Activated naive CD4-positive, alpha-beta T cell treated with anti-CD3 and anti-CD28 coated beads for 36 hours (primary cell): ENCODE measurements at regions of chr17 and their contacts with region 1.

Region 1: GRCh38 chr17:75289115-75289831 is at the start of gene SLC25A19:
- DNase-seq: peak; percentile 99
- H3K4me3 Mint-ChIP-seq: peak within 1 kb of the TSS; percentile 99
- H3K27ac Mint-ChIP-seq: peak within 1 kb of the TSS; percentile 100
- H3K4me1 Mint-ChIP-seq: peaks cover 26% of the 10 kb centered on the region
- H3K27me3 Mint-ChIP-seq: no peaks in the 10 kb centered on the region
- total RNA-seq, gene SLC25A19: 47.5 to 48.4 TPM

Region 2: GRCh38 chr17:74394977-74395376 is 894.3 kb before region 1 on chr17:
- CTCF ChIA-PET with region 1: no interaction called
- intact Hi-C with region 1: no loop called
- DNase-seq: no peak
- H3K4me3 Mint-ChIP-seq: no peak overlapping the region
- H3K27ac Mint-ChIP-seq: no peak overlapping the region
- H3K4me1 Mint-ChIP-seq: no peaks in the 10 kb centered on the region
- H3K27me3 Mint-ChIP-seq: no peaks in the 10 kb centered on the region

Region 3: DNA sequence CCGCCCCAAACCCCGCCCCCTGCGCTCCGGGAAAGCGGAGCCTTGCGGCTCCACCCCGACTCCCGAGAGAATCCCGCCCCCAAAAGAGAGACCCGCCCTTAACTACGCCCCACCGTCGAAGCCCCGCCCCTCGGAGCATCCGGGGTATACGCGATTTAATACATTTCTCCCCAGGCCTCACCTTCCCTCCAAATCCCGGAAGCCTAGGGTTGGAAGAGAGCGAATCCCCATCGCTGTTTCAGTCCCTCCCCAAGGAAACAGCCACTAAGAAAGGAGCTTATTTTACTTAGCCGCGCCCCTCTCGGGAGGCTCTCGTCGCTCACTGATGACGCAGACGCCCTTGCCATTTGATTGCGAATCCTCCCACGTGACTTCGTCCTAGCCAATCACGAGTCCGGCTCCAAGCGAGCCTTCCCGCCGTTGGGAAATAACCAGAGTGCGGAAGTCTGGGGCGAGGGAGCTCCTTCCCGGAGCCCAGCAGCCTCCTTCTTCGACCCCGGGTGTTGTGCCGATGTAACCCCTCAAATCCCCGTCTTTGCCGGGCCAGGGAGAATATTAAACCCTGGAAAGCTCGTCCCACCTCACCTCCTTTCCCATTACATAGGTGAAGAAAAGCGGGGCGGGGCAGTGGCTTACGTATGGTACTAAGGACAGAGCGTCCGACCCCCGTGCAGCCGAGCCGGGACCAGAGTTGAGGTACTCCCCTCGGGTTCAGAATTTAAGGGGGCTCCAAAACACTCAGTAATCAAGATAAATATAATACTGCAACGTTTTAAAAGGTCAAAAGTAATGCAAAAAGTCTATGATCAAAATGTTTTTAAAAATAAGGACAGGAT is 416.0 kb before region 1 on chr17:
- CTCF ChIA-PET with region 1: interaction called, 4 read pairs
- intact Hi-C with region 1: loop called (anchors 1 kb)
- DNase-seq: peak; percentile 100
- H3K4me3 Mint-ChIP-seq: peak overlapping the region; percentile 88
- H3K27ac Mint-ChIP-seq: peak overlapping the region; percentile 91
- H3K4me1 Mint-ChIP-seq: peaks cover 27% of the 10 kb centered on the region
- H3K27me3 Mint-ChIP-seq: no peaks in the 10 kb centered on the region

Region 4: GRCh38 chr17:75271233-75271954 is 17.9 kb before region 1 on chr17:
- CTCF ChIA-PET with region 1: interaction called, 29 read pairs
- intact Hi-C with region 1: loop called (anchors 1 kb)
- DNase-seq: peak; percentile 83
- H3K4me3 Mint-ChIP-seq: peak overlapping the region; percentile 76
- H3K27ac Mint-ChIP-seq: peak overlapping the region; percentile 70
- H3K4me1 Mint-ChIP-seq: peaks cover 35% of the 10 kb centered on the region
- H3K27me3 Mint-ChIP-seq: no peaks in the 10 kb centered on the region

Region 5: DNA sequence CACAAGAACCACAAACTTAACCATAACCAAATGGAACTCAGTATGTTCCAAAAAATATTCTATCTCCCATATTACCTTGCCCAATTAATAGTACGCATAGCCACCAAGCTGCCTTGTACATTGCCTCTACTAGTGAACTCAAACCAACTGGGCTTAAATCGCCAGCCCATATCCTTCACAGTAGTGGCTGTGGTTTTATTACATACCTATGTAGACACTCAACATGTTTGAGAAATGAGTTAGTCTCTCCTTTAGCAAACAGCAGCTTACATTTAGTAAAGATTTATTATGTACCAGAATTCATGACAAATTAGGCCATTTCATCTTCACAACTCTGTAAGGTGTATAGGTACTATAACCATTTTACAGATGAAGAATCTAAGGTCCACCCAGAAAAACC is 74.8 kb after region 1 on chr17:
- CTCF ChIA-PET with region 1: no interaction called
- intact Hi-C with region 1: loop called (anchors 2 kb)
- DNase-seq: no peak
- H3K4me3 Mint-ChIP-seq: no peak overlapping the region
- H3K27ac Mint-ChIP-seq: peak overlapping the region; percentile 82
- H3K4me1 Mint-ChIP-seq: peaks cover 93% of the 10 kb centered on the region
- H3K27me3 Mint-ChIP-seq: no peaks in the 10 kb centered on the region

Region 6: GRCh38 chr17:75456417-75457046 is 167.3 kb after region 1 on chr17 and contains the start of gene TMEM94:
- CTCF ChIA-PET with region 1: no interaction called
- intact Hi-C with region 1: loop called (anchors 1 kb)
- DNase-seq: peak; percentile 96
- H3K4me3 Mint-ChIP-seq: peak within 1 kb of the TSS; percentile 83
- H3K27ac Mint-ChIP-seq: peak within 1 kb of the TSS; percentile 85
- H3K4me1 Mint-ChIP-seq: peaks cover 15% of the 10 kb centered on the region
- H3K27me3 Mint-ChIP-seq: no peaks in the 10 kb centered on the region
- total RNA-seq, gene TMEM94: 50.4 to 53.5 TPM

Region 7: DNA sequence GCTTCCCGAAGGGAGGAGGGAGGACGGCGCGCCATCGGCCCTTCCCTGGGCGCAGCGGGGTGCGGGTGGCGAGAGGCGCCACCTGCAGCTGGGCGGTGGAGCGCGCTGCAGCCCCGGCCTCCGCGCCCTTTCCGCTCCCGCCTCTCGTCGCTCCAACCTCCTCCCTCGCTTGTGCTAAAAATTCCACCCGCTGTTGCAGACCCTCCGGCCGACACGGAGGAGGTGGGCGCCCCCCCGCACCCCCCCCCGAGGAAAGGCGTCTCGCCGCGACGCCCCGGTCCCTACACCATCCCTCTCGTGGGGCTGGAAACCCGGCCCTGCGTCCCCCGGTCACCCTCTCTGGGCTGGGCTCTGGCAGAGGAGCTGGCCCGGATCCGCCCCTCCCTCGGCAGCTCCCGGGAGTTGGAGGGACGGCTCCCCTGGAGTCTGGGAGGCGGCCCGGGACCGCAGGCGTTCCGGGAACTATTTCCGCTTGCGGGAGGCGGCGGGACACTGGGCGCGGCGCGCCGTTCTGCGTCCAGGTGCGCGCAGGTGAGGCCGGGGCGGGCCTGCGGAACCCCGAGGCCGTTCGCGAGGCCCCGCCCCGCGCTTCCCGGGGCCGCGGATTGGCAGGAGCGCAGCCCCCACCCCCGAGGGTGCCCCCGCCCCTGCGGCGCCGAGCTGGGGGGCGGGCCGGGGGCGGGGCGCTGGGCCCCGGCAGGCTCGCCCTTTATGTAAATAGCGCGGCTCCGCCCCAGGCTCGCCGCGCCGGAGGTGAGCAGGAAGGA is 235.9 kb after region 1 on chr17 and contains the start of gene LLGL2:
- CTCF ChIA-PET with region 1: no interaction called
- intact Hi-C with region 1: loop called (anchors 2 kb)
- DNase-seq: peak; percentile 74
- H3K4me3 Mint-ChIP-seq: peak within 1 kb of the TSS; percentile 58
- H3K27ac Mint-ChIP-seq: no peak within 1 kb of the TSS
- H3K4me1 Mint-ChIP-seq: peaks cover 9% of the 10 kb centered on the region
- H3K27me3 Mint-ChIP-seq: no peaks in the 10 kb centered on the region
- total RNA-seq, gene LLGL2: 6.2 to 6.8 TPM

Region 8: DNA sequence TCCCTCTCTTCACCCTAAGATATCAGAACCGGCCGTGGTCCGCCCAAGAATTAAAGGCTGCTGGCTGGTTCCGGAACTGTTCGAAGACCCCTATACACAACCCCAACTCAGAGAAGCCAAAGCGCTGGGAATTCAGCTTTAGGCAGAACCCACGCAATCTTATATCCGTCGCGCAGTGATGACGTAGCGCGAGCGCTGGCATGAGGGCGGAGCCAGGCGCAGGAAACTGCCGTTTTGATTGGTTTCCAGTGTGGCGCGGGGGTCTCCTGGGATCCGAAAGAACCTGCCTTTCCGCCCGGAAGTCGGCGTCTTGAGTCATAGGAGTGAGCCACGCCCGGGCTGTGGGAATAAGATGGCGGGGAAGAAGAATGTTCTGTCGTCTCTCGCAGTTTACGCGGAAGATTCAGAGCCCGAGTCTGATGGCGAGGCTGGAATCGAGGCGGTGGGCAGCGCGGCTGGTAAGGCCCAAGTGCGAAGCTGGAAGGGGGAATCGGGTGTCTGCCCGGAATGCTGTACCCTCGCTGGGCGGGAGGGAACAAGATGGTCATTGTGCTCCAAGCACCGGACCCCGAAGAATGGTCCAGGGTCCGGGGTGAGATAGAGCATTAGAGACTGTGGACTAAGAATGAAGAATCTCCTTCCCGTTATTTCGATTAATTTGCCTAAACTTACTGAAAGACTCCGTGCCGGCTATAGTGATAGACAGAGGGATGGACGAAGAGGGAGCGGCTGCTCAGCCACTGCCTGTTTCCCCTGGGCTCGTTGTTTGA is 377.9 kb after region 1 on chr17 and contains the starts of genes RECQL5 and SAP30BP:
- CTCF ChIA-PET with region 1: no interaction called
- intact Hi-C with region 1: loop called (anchors 1 kb)
- DNase-seq: peak; percentile 99
- H3K4me3 Mint-ChIP-seq: peak within 1 kb of the TSS; percentile 64
- H3K27ac Mint-ChIP-seq: no peak within 1 kb of the TSS
- H3K4me1 Mint-ChIP-seq: peaks cover 35% of the 10 kb centered on the region
- H3K27me3 Mint-ChIP-seq: no peaks in the 10 kb centered on the region
- total RNA-seq, gene RECQL5: 36.2 to 44.0 TPM
- total RNA-seq, gene SAP30BP: 68.3 TPM